ENCODE measurements at regions of chr14 and their contacts with region 1.

Region 1: DNA sequence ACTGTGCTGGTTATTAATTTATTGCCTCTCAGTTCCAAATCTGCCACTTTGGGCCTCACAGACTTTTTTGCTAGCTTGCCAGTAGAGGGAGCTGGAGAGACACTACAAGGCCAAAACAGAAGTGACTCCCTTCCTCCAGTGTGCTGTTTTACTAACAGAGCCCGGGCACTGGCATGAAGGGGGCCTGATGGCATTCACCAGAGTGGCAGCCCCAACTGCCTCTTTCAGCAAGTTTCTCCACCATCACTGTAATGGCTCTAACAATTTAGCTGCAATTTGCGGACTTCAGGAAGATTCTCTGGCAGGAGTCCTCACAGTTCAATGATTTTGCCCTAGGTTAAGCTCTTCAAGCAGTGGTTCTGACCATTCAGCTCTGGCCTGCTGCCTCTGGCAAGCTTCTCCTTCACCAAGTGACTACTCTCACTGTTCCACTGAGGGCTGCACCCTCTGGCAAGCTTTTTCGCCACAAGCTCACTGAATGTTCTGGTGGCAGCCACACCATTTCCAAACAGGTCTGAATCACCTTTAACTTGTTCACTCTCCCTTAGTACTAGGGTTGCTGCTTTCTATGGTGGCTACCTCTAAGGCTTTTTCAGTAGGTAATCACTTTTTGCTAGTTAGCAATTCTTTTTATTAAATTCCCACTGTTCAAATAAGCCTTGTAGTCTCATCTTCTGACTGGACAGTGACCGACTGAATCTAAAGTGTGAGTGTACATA is 104.9 kb downstream of the ZC3H14 start:
- DNase-seq: peak; percentile 87
- H3K4me3 Mint-ChIP-seq: no peak overlapping the region
- H3K27ac Mint-ChIP-seq: no peak overlapping the region
- H3K4me1 Mint-ChIP-seq: no peaks in the 10 kb centered on the region
- H3K27me3 Mint-ChIP-seq: no peaks in the 10 kb centered on the region
- CTCF ChIP-seq: peak; percentile 84

Region 2: DNA sequence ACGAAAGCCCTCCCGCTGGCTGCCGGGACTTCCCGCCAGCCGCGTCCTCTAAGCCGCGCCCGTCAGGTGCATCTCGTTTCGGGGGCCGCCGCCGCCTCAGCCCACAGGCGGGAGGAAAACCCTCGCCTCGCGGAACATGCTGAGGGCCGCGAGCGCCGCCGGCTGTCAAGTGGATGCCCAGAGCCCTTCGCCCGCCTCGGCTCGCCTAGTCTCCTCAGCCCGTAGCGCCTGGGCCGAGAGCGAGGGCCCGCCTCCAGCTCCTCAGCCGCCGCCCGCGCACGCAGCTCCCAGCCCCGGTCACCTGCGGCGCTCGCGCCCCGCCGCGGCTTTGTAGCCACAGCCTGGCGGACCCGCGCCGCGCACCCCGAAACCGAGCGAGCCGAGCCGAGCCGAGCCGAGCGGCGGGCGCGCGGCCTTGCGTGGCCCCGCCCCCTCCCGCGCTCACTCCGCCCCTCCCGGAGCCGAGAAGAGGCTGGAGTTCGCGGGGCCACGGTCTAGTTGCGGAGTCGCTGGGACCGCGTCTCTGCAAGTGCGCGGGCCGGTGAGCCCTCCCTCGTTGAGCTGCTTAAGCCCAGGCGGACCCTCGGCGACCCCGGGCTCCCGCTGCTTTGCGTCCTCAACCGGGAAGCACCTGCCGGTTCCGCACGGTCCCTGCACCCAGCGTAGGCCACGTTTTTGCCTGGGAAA is 125.0 kb after region 1 on chr14 and contains the start of gene EML5:
- CTCF ChIA-PET with region 1: interaction called, 20 read pairs
- POLR2A ChIA-PET with region 1: interaction called, 4 read pairs
- intact Hi-C with region 1: loop called (anchors 2 kb)
- DNase-seq: peak; percentile 79
- H3K4me3 Mint-ChIP-seq: peak within 1 kb of the TSS; percentile 70
- H3K27ac Mint-ChIP-seq: no peak within 1 kb of the TSS
- H3K4me1 Mint-ChIP-seq: no peaks in the 10 kb centered on the region
- H3K27me3 Mint-ChIP-seq: no peaks in the 10 kb centered on the region
- CTCF ChIP-seq: peak; percentile 3
- total RNA-seq, gene EML5: 0.37 and 0.54 TPM in 2 replicates

Region 3: GRCh38 chr14:88849716-88850115 is 182.0 kb after region 1 on chr14:
- CTCF ChIA-PET with region 1: interaction called, 10 read pairs
- POLR2A ChIA-PET with region 1: no interaction called
- intact Hi-C with region 1: no loop called
- DNase-seq: peak; percentile 29
- H3K4me3 Mint-ChIP-seq: no peak overlapping the region
- H3K27ac Mint-ChIP-seq: peak overlapping the region; percentile 40
- H3K4me1 Mint-ChIP-seq: no peaks in the 10 kb centered on the region
- H3K27me3 Mint-ChIP-seq: no peaks in the 10 kb centered on the region
- CTCF ChIP-seq: no peak

Region 4: DNA sequence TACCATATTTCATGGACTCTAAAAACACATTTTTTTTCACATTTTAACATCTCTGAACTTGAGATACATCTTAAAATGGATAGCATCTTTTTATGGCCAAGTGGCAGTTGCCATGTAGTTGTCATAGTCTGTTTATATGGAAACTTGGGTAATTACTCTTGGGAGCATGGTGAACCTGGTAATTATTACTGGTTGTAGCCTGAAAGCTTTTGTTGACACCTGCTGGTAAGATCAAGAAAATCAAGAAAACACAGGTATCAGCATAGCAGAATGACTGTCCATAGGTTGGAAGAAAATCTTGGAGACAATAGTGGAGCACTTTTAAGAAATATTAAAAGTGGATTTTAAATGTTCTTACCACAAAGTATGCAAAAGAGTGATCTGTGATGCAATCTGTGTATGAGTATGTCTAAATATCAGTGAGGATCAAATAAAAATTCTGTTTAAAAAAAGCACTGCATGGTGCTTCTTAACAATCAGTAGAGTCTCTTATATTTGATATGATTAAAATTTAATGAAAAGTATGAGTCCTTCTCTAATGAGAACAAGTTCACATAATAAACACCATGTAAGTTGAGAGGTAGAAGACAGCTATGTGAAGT is 200.9 kb after region 1 on chr14:
- CTCF ChIA-PET with region 1: interaction called, 106 read pairs
- POLR2A ChIA-PET with region 1: interaction called, 18 read pairs
- intact Hi-C with region 1: loop called (anchors 1 kb)
- DNase-seq: peak; percentile 51
- H3K4me3 Mint-ChIP-seq: no peak overlapping the region
- H3K27ac Mint-ChIP-seq: no peak overlapping the region
- H3K4me1 Mint-ChIP-seq: no peaks in the 10 kb centered on the region
- H3K27me3 Mint-ChIP-seq: no peaks in the 10 kb centered on the region
- CTCF ChIP-seq: peak; percentile 61

Region 5: DNA sequence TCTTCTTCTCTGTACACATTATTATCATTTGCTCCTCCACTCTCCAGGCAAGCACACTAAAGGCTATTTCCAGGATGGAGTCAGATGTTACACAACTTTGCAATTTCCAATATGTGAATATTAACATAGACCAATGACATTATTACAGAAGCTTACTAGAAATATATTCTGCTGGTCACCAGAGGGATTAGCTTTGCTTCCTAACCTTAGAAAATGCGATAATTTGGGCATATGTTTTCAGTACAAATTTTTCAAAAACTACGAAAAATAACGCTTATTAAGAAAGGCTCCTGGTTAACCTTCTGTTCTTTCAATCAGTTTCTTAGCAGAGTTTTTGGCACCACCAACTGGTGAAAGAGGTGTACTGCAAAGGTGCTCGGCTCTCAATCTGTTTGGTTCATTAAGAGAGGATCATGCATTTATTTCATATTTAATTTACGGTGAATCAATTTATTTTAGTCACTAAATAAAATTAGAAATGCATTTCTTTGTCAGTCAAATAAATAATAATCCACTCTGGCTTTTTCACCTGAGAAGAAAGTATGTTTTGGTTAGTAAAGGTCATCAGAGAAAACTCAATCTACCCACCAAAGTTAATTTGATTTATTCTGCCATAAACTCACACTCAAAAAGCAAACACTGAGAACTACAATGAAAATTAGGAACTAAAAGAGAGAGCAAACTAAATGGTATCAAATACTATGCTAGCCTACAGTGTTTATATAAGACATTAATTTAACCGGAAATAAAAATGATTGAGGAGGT is 1247.6 kb after region 1 on chr14:
- CTCF ChIA-PET with region 1: interaction called, 3 read pairs
- POLR2A ChIA-PET with region 1: no interaction called
- intact Hi-C with region 1: loop called (anchors 5 kb)
- DNase-seq: peak; percentile 78
- H3K4me3 Mint-ChIP-seq: no peak overlapping the region
- H3K27ac Mint-ChIP-seq: no peak overlapping the region
- H3K4me1 Mint-ChIP-seq: no peaks in the 10 kb centered on the region
- H3K27me3 Mint-ChIP-seq: no peaks in the 10 kb centered on the region
- CTCF ChIP-seq: peak; percentile 91